Naive thymus-derived CD4-positive, alpha-beta T cell (primary cell): ENCODE measurements at regions of chr13 and their contacts with region 1.

Region 1: GRCh38 chr13:41310963-41311606 is at the start of gene NAA16:
- DNase-seq: peak; percentile 91 to 99 (median 94)
- ATAC-seq: peak; percentile 91
- H3K4me3 ChIP-seq: peak within 1 kb of the TSS; percentile 97
- H3K4me3 Mint-ChIP-seq: peak within 1 kb of the TSS; percentile 80 to 99 (median 98)
- H3K27ac ChIP-seq: peak within 1 kb of the TSS; percentile 91
- H3K27ac Mint-ChIP-seq: peak within 1 kb of the TSS; percentile 76 to 96 (median 95)
- H3K4me1 ChIP-seq: peaks cover 25 to 29% of the 10 kb centered on the region in 2 donors
- H3K4me1 Mint-ChIP-seq: peaks cover 14 to 55% (median 41%) of the 10 kb centered on the region in 7 donors
- H3K27me3 ChIP-seq: no peaks in the 10 kb centered on the region
- H3K27me3 Mint-ChIP-seq: no peaks in the 10 kb centered on the region
- total RNA-seq, gene NAA16: 30.6 to 99.6 (median 90.4) TPM

Region 2: GRCh38 chr13:41132512-41133152 is 178.5 kb before region 1 on chr13 and contains the start of gene KBTBD6:
- CTCF ChIA-PET with region 1: no interaction called
- POLR2A ChIA-PET with region 1: no interaction called
- intact Hi-C with region 1: loop called (anchors 1 kb)
- DNase-seq: peak; percentile 76 to 93 (median 87)
- ATAC-seq: peak; percentile 98
- H3K4me3 ChIP-seq: peak within 1 kb of the TSS; percentile 77
- H3K4me3 Mint-ChIP-seq: peak within 1 kb of the TSS; percentile 94 to 99 (median 98)
- H3K27ac ChIP-seq: peak within 1 kb of the TSS; percentile 67
- H3K27ac Mint-ChIP-seq: peak within 1 kb of the TSS; percentile 91 to 97 (median 93)
- H3K4me1 ChIP-seq: peaks cover 15 to 24% of the 10 kb centered on the region in 2 donors
- H3K4me1 Mint-ChIP-seq: peaks cover 32 to 60% (median 54%) of the 10 kb centered on the region in 7 donors
- H3K27me3 ChIP-seq: no peaks in the 10 kb centered on the region
- H3K27me3 Mint-ChIP-seq: no peaks in the 10 kb centered on the region
- total RNA-seq, gene KBTBD6: 3.9 to 9.2 (median 7.7) TPM

Region 3: GRCh38 chr13:41222259-41222852 is 88.7 kb before region 1 on chr13:
- CTCF ChIA-PET with region 1: no interaction called
- POLR2A ChIA-PET with region 1: no interaction called
- intact Hi-C with region 1: loop called in 1 of 2 experiments (anchors 2 kb)
- DNase-seq: peak in 8 of 9 donors; percentile 32 to 61 (median 53)
- ATAC-seq: peak; percentile 94
- H3K4me3 ChIP-seq: no peak overlapping the region
- H3K4me3 Mint-ChIP-seq: no peak overlapping the region
- H3K27ac ChIP-seq: no peak overlapping the region
- H3K27ac Mint-ChIP-seq: no peak overlapping the region
- H3K4me1 ChIP-seq: no peaks in the 10 kb centered on the region
- H3K4me1 Mint-ChIP-seq: peaks cover 0 to 4% (median 0%) of the 10 kb centered on the region in 7 donors
- H3K27me3 ChIP-seq: no peaks in the 10 kb centered on the region
- H3K27me3 Mint-ChIP-seq: no peaks in the 10 kb centered on the region

Region 4: DNA sequence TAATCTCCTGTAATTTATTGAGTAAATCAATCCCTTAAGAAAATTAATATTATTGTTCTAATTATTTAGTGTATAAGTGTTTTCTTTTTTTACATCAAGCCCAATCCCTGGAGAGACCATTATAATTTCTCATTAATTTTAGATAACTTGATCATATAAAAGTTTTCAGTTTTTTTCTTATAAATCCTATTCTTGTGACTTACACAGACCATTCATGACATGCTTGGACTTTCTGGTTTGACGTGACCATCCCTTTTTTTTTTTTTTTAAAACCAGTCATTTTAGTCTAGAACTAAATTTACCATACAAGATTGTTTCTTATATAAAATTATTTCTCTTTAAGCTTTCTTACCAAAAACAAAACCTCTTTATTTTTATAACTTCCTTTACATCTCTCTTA is 42.3 kb before region 1 on chr13:
- CTCF ChIA-PET with region 1: interaction called, 4 read pairs
- POLR2A ChIA-PET with region 1: interaction called, 12 read pairs
- intact Hi-C with region 1: loop called (anchors 1 kb)
- DNase-seq: peak in 5 of 9 donors; percentile 14 to 31 (median 23)
- ATAC-seq: no peak
- H3K4me3 ChIP-seq: no peak overlapping the region
- H3K4me3 Mint-ChIP-seq: no peak overlapping the region
- H3K27ac ChIP-seq: no peak overlapping the region
- H3K27ac Mint-ChIP-seq: peak overlapping the region in 2 of 9 donors; percentile 57 to 62
- H3K4me1 ChIP-seq: peaks cover 4 to 23% of the 10 kb centered on the region in 2 donors
- H3K4me1 Mint-ChIP-seq: peaks cover 7 to 50% (median 25%) of the 10 kb centered on the region in 7 donors
- H3K27me3 ChIP-seq: no peaks in the 10 kb centered on the region
- H3K27me3 Mint-ChIP-seq: no peaks in the 10 kb centered on the region

Region 5: DNA sequence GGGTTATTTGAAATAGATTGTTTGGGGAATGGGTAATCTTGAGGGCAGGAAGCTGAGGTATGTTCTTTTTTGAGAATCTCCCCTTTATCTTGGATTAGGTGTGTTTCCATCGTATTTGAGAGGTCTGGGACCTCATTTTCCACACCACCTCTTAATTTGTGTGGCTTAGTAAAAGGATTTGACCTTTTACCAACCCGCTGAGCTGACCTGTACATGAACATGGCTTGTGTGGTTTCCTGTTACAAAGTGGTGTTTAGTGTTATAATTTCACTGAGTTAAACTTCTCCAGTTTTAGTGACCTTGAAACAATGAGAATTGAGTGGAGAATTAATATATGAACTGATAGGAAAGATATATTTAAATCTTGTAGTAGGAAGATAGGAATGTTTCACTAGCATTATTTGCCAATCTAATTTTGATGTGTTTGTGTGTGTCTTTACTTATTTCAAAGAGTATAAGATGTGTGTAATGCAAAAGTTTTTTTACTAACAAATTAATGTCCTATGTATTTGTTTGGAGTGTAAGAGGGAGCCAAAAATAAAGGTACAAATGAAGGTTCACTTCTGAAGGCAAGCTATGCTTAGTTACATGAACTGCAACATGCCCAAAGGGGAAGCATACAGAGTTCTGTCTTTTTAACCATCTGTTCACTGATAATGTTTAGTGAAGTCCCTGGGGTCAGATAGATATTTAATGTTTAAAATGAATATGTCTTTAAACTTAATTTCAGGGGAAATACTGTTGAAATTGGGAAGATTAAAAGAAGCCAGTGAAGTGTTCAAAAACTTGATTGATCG is 17.1 kb after region 1 on chr13:
- CTCF ChIA-PET with region 1: no interaction called
- POLR2A ChIA-PET with region 1: interaction called, 8 read pairs
- intact Hi-C with region 1: loop called in 1 of 2 experiments (anchors 2 kb)
- DNase-seq: no peak
- ATAC-seq: no peak
- H3K4me3 ChIP-seq: no peak overlapping the region
- H3K4me3 Mint-ChIP-seq: peak overlapping the region in 6 of 10 donors; percentile 1 to 54 (median 24)
- H3K27ac ChIP-seq: no peak overlapping the region
- H3K27ac Mint-ChIP-seq: peak overlapping the region in 5 of 9 donors; percentile 34 to 78 (median 55)
- H3K4me1 ChIP-seq: peaks cover 11 to 17% of the 10 kb centered on the region in 2 donors
- H3K4me1 Mint-ChIP-seq: peaks cover 15 to 83% (median 59%) of the 10 kb centered on the region in 7 donors
- H3K27me3 ChIP-seq: no peaks in the 10 kb centered on the region
- H3K27me3 Mint-ChIP-seq: no peaks in the 10 kb centered on the region

Region 6: GRCh38 chr13:42048682-42049453 is 737.8 kb after region 1 on chr13:
- CTCF ChIA-PET with region 1: no interaction called
- POLR2A ChIA-PET with region 1: no interaction called
- intact Hi-C with region 1: loop called in 1 of 2 experiments (anchors 2 kb)
- DNase-seq: peak; percentile 20 to 81 (median 43)
- ATAC-seq: peak; percentile 81
- H3K4me3 ChIP-seq: peak overlapping the region; percentile 84
- H3K4me3 Mint-ChIP-seq: peak overlapping the region; percentile 83 to 96 (median 92)
- H3K27ac ChIP-seq: peak overlapping the region; percentile 67
- H3K27ac Mint-ChIP-seq: peak overlapping the region in 2 of 9 donors; percentile 74 to 78
- H3K4me1 ChIP-seq: peaks cover 5 to 9% of the 10 kb centered on the region in 2 donors
- H3K4me1 Mint-ChIP-seq: peaks cover 6 to 38% (median 15%) of the 10 kb centered on the region in 7 donors
- H3K27me3 ChIP-seq: no peaks in the 10 kb centered on the region
- H3K27me3 Mint-ChIP-seq: peaks cover 0 to 15% (median 0%) of the 10 kb centered on the region in 5 donors